Mammary epithelial cell (primary cell): ENCODE measurements at regions of chr10 and their contacts with region 1.

Region 1: GRCh38 chr10:114304017-114304570 is 65.0 kb downstream of the VWA2 start:
- DNase-seq: peak; percentile 60
- H3K4me3 ChIP-seq: no peak overlapping the region
- H3K27ac ChIP-seq: no peak overlapping the region
- H3K4me1 ChIP-seq: peaks cover 46% of the 10 kb centered on the region
- H3K27me3 ChIP-seq: no peaks in the 10 kb centered on the region
- CTCF ChIP-seq: peak; percentile 67 to 76

Region 2: GRCh38 chr10:114151486-114151885 is 152.6 kb before region 1 on chr10:
- CTCF ChIA-PET with region 1: no interaction called
- dilution Hi-C with region 1: no loop called
- in situ Hi-C with region 1: no loop called
- intact Hi-C with region 1: loop called (anchors 1 kb)
- DNase-seq: peak; percentile 94
- H3K4me3 ChIP-seq: no peak overlapping the region
- H3K27ac ChIP-seq: peak overlapping the region; percentile 94
- H3K4me1 ChIP-seq: peaks cover 17% of the 10 kb centered on the region
- H3K27me3 ChIP-seq: no peaks in the 10 kb centered on the region
- CTCF ChIP-seq: no peak

Region 3: DNA sequence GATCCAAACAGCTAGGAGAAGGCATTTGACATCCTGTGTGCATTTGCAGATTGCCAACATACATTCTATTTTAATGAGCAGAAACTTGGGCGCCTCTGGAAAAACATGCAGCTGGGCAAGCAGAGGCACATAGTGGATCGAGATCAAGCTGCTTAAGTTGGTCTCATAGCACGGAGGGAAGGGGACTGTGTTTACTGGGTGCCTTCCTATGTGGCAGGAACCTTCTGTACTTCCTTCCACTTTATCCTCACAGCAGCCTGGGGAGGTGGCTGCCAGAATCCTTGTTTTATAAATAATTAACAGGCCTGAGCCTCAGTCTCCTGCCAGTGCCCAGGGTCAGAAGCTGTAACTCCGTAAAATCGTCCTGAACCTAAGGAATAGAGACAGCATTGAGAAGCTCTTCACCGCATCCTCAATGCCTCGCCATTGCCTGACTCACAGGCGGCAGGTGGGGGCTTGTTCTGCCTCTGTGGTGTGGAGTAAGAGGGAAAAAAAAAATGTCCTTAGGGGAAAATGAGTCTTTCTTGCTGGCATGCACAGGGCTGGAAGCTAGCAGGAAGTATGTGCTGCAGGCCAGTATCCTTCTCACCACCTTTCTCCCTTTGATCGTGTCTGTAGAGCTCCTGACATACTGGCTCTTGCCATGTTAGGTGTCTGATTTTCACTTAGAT is 58.8 kb before region 1 on chr10:
- CTCF ChIA-PET with region 1: no interaction called
- dilution Hi-C with region 1: no loop called
- in situ Hi-C with region 1: no loop called
- intact Hi-C with region 1: loop called (anchors 1 kb)
- DNase-seq: peak; percentile 97
- H3K4me3 ChIP-seq: peak overlapping the region; percentile 21 to 39 (median 38)
- H3K27ac ChIP-seq: peak overlapping the region; percentile 86
- H3K4me1 ChIP-seq: peaks cover 44% of the 10 kb centered on the region
- H3K27me3 ChIP-seq: no peaks in the 10 kb centered on the region
- CTCF ChIP-seq: no peak

Region 4: GRCh38 chr10:114403541-114404161 is 99.6 kb after region 1 on chr10:
- CTCF ChIA-PET with region 1: interaction called, 10 read pairs
- dilution Hi-C with region 1: no loop called
- in situ Hi-C with region 1: loop called (anchors 10 kb)
- intact Hi-C with region 1: loop called (anchors 1 kb)
- DNase-seq: peak; percentile 71
- H3K4me3 ChIP-seq: peak overlapping the region; percentile 83 to 88 (median 88)
- H3K27ac ChIP-seq: peak overlapping the region; percentile 79
- H3K4me1 ChIP-seq: peaks cover 51% of the 10 kb centered on the region
- H3K27me3 ChIP-seq: no peaks in the 10 kb centered on the region
- CTCF ChIP-seq: peak; percentile 27 to 59

Region 5: GRCh38 chr10:114453576-114453975 is 149.5 kb after region 1 on chr10:
- CTCF ChIA-PET with region 1: no interaction called
- dilution Hi-C with region 1: loop called (anchors 5 kb)
- in situ Hi-C with region 1: no loop called
- intact Hi-C with region 1: no loop called
- DNase-seq: no peak
- H3K4me3 ChIP-seq: no peak overlapping the region
- H3K27ac ChIP-seq: no peak overlapping the region
- H3K4me1 ChIP-seq: no peaks in the 10 kb centered on the region
- H3K27me3 ChIP-seq: no peaks in the 10 kb centered on the region
- CTCF ChIP-seq: no peak

Region 6: GRCh38 chr10:114694752-114695151 is 390.7 kb after region 1 on chr10:
- CTCF ChIA-PET with region 1: no interaction called
- dilution Hi-C with region 1: no loop called
- in situ Hi-C with region 1: no loop called
- intact Hi-C with region 1: loop called (anchors 5 kb)
- DNase-seq: no peak
- H3K4me3 ChIP-seq: no peak overlapping the region
- H3K27ac ChIP-seq: no peak overlapping the region
- H3K4me1 ChIP-seq: peaks cover 25% of the 10 kb centered on the region
- H3K27me3 ChIP-seq: no peaks in the 10 kb centered on the region
- CTCF ChIP-seq: peak; percentile 52 to 66